Mammary epithelial cell (primary cell): ENCODE measurements at regions of chr2 and their contacts with region 1.

Region 1: GRCh38 chr2:223101340-223102039 is 49.5 kb downstream of the KCNE4 start:
- DNase-seq: peak; percentile 90
- H3K4me3 ChIP-seq: no peak overlapping the region
- H3K27ac ChIP-seq: peak overlapping the region; percentile 13
- H3K4me1 ChIP-seq: peaks cover 24% of the 10 kb centered on the region
- H3K27me3 ChIP-seq: no peaks in the 10 kb centered on the region
- CTCF ChIP-seq: peak; percentile 54 to 66

Region 2: GRCh38 chr2:222915092-222915957 is 186.2 kb before region 1 on chr2:
- CTCF ChIA-PET with region 1: no interaction called
- dilution Hi-C with region 1: no loop called
- in situ Hi-C with region 1: no loop called
- intact Hi-C with region 1: loop called (anchors 5 kb)
- DNase-seq: no peak
- H3K4me3 ChIP-seq: no peak overlapping the region
- H3K27ac ChIP-seq: no peak overlapping the region
- H3K4me1 ChIP-seq: peaks cover 6% of the 10 kb centered on the region
- H3K27me3 ChIP-seq: no peaks in the 10 kb centered on the region
- CTCF ChIP-seq: peak; percentile 35 to 42

Region 3: GRCh38 chr2:222976521-222977076 is 124.9 kb before region 1 on chr2:
- CTCF ChIA-PET with region 1: no interaction called
- dilution Hi-C with region 1: loop called (anchors 5 kb)
- in situ Hi-C with region 1: loop called (anchors 5 to 10 kb)
- intact Hi-C with region 1: loop called (anchors 1 kb)
- DNase-seq: no peak
- H3K4me3 ChIP-seq: no peak overlapping the region
- H3K27ac ChIP-seq: no peak overlapping the region
- H3K4me1 ChIP-seq: peaks cover 15% of the 10 kb centered on the region
- H3K27me3 ChIP-seq: no peaks in the 10 kb centered on the region
- CTCF ChIP-seq: no peak

Region 4: DNA sequence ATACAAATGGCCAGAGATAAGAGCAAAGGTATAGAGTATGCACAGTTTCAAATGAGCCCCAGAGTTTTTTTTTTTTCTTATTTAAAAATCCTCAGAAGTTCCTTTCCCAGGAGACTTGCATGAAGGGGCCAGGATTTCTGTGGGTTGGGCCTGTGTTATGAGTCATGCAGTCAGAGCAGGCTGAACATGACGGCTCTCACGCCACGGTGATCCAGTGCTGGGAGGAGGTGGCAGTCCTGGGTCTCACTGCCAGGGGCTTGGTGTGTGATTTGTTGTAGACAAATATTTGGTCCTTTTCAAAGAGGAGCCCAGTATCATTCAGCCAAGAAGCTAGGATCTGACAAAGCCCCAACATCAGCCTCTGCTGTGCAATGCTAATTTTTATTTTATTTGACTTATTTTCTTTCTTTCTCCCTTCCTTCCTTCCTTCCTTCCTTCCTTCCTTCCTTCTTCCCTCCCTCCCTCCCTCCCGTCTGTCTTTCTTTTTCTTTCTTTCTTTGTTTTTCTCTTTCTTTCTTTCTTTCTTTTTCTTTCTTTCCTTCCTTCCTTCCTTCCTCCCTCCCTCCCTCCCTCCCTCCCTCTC is 59.9 kb before region 1 on chr2:
- CTCF ChIA-PET with region 1: no interaction called
- dilution Hi-C with region 1: no loop called
- in situ Hi-C with region 1: no loop called
- intact Hi-C with region 1: loop called (anchors 2 kb)
- DNase-seq: peak; percentile 87
- H3K4me3 ChIP-seq: no peak overlapping the region
- H3K27ac ChIP-seq: peak overlapping the region; percentile 82
- H3K4me1 ChIP-seq: peaks cover 31% of the 10 kb centered on the region
- H3K27me3 ChIP-seq: no peaks in the 10 kb centered on the region
- CTCF ChIP-seq: no peak

Region 5: DNA sequence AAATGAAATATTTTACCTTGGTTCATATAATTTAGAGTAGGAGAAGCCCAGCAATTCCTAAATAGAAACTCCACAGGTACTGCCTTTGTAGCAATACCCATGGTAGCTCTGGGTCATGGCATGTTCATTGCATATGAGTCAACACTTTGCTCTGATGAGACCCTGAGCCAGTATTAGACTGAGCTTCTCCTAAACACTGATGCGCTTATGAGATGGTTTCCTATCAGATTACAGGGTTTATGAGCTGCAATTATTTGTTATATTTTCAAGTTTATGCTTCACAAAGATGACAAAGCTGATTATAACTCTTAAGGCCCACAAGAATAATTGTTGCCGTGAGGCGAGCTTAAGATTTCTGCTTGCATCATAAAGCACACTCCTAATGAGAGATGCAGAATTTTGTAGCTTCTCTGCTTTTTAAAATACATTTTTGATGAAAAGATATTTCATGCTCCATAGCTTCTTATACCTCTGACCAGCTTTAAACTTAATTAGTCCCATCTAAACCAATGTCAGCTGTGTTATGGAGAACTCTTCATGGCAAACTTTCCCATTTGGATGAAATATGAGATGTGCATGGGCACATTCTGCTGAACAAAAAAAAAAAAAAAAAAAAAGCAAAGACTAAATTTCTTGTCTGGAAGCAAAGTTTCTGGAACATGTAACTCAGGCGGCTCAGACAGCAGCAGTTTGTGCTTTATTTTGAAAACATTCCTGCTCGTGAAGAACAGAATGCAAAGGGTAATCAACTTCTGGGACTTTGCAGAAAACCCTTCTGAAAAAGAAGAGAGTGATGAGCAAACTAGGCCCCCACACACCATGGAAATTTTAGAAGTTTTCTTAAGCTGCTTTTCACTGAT is 113.1 kb after region 1 on chr2:
- CTCF ChIA-PET with region 1: no interaction called
- dilution Hi-C with region 1: no loop called
- in situ Hi-C with region 1: no loop called
- intact Hi-C with region 1: no loop called
- DNase-seq: no peak
- H3K4me3 ChIP-seq: no peak overlapping the region
- H3K27ac ChIP-seq: no peak overlapping the region
- H3K4me1 ChIP-seq: peaks cover 7% of the 10 kb centered on the region
- H3K27me3 ChIP-seq: no peaks in the 10 kb centered on the region
- CTCF ChIP-seq: no peak

Region 6: DNA sequence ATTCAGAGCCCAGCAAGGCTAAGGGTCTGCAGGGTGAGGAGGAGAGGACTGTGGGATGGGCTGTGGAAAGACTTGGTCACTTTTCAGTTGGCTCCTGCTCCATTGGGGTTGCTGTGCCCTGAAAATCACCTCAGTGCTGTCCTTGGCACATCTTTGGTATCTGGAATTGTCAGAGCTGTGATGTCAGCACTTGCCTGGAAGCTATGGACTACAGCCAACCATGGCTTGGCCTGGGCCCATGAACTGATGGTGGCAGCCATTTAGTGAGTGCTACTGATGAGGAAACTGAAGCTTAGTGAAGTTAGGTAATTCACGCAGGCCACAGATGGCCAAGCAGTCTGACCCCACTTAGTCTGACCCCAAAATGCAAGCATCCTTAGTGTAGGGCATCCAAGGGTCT is 1059.4 kb after region 1 on chr2:
- CTCF ChIA-PET with region 1: no interaction called
- dilution Hi-C with region 1: no loop called
- in situ Hi-C with region 1: no loop called
- intact Hi-C with region 1: no loop called
- DNase-seq: peak; percentile 31
- H3K4me3 ChIP-seq: no peak overlapping the region
- H3K27ac ChIP-seq: no peak overlapping the region
- H3K4me1 ChIP-seq: peaks cover 8% of the 10 kb centered on the region
- H3K27me3 ChIP-seq: no peaks in the 10 kb centered on the region
- CTCF ChIP-seq: no peak